ENCODE measurements at regions of chr11 and their contacts with region 1.

Region 1: DNA sequence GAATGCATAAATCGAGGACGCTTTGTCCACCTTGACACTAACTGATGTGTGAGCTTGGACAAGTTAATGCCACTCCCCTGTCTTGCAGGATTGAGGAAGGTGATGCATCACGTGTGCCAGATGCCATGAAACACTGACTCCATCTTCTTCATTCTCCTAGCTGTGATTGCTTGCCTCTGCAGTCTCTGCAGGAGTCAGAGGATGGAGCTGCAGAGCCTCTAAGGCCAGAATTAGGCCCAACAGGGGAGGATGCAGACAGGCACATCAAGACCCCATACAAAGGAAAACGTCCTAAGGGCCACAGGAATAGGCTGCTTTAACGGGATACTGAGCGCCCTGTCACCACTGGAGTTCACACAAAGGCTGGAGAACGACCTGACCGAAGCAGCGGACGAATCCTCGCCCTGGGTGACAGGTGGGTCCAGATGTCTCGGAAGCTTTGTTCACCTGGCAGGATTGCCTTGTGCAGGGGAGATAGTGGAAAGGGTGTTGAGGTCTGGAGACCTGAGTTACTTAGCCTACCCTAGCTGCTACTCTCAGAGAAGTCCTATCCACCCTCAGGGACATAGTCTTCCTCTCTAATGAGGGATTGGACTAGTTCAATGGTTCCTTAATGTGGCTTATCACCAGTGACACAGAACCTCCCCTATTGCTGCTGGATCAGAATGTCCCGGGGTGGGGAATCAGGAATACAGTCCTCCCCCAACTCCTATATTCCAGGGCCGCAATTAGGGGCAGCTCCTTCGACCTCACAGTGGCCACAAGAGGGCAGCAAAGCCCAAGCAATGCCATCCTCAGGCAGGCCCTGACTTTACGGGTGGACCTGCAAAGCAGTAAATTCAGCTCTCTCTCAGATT is 32.4 kb downstream of the DBX1 start:
- DNase-seq: peak; percentile 73
- CTCF ChIP-seq: peak; percentile 93

Region 2: GRCh38 chr11:19951558-19952115 is 176.3 kb before region 1 on chr11:
- in situ Hi-C with region 1: loop called (anchors 10 kb)
- DNase-seq: peak; percentile 48
- CTCF ChIP-seq: peak; percentile 55

Region 3: GRCh38 chr11:20327377-20327935 is 199.6 kb after region 1 on chr11:
- in situ Hi-C with region 1: no loop called
- DNase-seq: no peak
- CTCF ChIP-seq: no peak

Region 4: GRCh38 chr11:20355221-20356219 is 227.6 kb after region 1 on chr11:
- in situ Hi-C with region 1: loop called (anchors 10 kb)
- DNase-seq: peak; percentile 32
- CTCF ChIP-seq: peak; percentile 58